Lower leg skin (tissue), 4 donors: ENCODE measurements at regions of chr20 and their contacts with region 1.

Region 1: DNA sequence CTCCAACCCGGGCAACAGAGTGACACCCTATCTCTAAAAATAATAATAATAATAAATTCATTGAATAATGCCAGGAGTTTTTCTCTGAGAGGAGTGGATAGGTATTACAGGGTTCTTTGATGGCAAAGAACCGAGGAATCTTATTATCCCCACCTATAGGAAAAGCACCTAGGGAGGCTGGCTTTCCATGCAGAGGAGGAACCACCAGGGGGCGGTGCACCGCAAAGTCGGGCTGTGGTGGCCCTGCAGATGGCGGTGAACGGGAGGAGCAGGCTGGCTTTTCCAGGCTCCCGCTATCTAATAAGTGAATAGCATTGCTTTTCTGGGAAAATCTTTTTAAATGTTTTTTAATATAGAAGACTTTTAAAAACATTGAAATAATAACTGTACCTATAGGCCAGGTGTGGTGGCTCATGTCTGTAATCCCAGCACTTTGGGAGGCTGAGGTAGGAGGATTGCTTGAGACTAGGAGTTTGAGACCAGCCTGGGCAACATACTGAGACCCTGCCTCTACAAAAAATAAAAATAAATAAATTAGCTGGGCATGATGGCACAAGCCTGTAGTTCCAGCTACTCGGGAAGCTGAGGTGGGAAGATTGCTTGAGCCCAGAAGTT is 864.2 kb downstream of the KIF16B start:
- DNase-seq: no peak
- H3K4me3 ChIP-seq: no peak overlapping the region
- CTCF ChIP-seq: no peak
- POLR2A ChIP-seq: no peak

Region 2: DNA sequence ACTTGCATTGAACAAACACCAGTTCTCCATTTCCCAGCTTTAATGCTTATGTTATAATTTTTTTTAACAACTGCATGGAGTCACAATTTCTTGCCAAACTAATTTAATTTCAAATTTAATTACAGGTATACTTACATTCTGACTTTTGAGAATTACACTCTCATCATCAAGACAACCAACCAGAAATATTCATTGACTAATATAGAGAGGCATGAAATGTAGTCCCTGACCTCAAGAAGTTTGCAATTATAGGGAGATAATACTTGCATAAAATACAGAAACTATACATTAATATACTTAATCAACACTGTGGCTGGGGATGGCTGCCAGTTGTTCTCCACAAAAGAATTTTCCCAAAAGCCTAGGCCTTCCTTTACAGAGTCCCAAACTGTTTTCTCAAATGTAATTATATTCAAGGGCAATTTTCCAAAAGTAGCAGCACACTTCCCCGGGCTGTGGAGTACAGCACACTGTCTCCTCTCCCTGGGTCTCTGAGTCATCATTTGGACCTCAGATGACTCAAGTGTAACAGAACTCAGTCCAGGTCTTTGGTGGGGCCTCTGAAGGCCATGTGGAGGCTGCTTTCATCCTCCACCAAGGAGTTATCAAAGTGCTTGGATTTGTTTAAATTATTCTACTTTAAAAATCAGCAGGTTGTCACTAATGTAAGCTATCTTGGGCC is 750.1 kb after region 1 on chr20:
- intact Hi-C with region 1: loop called (anchors 10 kb)
- DNase-seq: peak in 1 of 2 donors; percentile 48
- H3K4me3 ChIP-seq: no peak overlapping the region
- CTCF ChIP-seq: no peak
- POLR2A ChIP-seq: no peak